ENCODE measurements at regions of chr1 and their contacts with region 1.

Region 1: GRCh38 chr1:16009030-16009709 is 5.1 kb downstream of the SRARP start:
- DNase-seq: peak; percentile 83
- ATAC-seq: peak; percentile 7 to 19

Region 2: DNA sequence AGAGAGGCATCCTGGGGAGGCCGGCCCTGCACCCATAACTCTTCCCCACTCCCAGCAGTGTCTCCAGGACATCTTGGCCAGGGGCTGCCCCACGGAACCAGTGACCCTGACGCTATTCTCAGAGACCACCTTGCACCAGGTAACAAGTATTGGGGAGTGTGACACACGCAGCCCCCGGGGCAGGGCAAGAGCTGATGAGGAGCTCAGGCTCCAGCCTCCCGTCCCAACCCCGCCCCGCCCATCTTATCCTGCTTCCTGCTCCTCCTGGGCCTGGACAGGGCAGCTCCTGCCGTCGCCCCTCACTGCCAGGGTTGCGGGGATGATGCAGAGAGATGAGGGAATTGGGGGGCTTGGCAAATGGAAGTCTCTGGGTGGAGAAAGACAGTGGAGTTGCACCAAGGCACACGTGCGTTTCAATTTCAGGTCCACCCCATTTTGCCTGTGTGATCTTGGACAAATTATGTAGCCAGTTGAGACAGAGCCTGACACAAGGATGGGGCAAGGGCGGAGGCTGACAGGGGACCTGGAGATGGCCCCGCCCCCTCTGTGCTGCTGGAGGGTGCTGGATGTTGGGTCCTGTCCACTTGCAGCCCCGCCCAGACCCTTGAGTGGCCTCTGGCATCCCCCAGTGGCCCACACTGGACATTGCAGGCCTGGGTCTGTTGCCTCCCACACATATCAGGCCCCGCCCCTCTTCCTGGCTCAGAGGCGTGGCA is 23.4 kb after region 1 on chr1:
- intact Hi-C with region 1: loop called in 1 of 2 experiments (anchors 1 kb)
- DNase-seq: peak; percentile 89
- ATAC-seq: peak; percentile 94 to 96

Region 3: DNA sequence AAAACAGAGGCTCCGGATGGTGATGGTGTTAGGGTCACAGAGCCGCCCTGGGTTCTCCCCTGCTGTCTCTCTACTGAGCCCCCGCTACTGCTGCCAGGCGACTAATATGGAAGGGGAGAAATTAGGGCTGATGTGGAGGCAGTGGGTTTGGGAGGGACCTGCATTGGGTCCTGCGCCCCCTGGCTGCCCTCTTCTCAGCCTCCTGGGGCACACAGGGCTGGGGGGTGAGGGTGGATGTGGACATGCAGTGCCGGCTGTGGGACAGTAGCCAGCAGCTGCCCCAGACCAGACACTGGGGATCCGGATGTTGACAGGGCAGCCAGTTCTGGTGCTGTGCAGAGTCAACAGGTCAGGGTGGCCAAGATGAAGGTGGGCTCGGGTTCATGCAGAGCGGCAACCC is 32.9 kb after region 1 on chr1:
- intact Hi-C with region 1: loop called in 1 of 2 experiments (anchors 5 kb)
- DNase-seq: no peak
- ATAC-seq: no peak

Region 4: GRCh38 chr1:16055613-16056520 is 46.7 kb after region 1 on chr1:
- intact Hi-C with region 1: loop called (anchors 1 to 10 kb)
- DNase-seq: peak; percentile 89
- ATAC-seq: peak; percentile 83 to 86